HepG2 (cell line): ENCODE measurements at regions of chr5 and their contacts with region 1.

Region 1: GRCh38 chr5:5665225-5666075 is 243.0 kb downstream of the ICE1 start:
- DNase-seq: no peak
- ATAC-seq: no peak
- H3K4me3 ChIP-seq: no peak overlapping the region
- H3K27ac ChIP-seq: no peak overlapping the region
- H3K4me1 ChIP-seq: no peaks in the 10 kb centered on the region
- H3K27me3 ChIP-seq: peaks cover 0 to 13% of the 10 kb centered on the region in 2 experiments; a peak in 2 of 5 replicates
- CTCF ChIP-seq: no peak
- EP300 ChIP-seq: no peak
- POLR2A ChIP-seq: no peak
- RAD21 ChIP-seq: no peak

Region 2: DNA sequence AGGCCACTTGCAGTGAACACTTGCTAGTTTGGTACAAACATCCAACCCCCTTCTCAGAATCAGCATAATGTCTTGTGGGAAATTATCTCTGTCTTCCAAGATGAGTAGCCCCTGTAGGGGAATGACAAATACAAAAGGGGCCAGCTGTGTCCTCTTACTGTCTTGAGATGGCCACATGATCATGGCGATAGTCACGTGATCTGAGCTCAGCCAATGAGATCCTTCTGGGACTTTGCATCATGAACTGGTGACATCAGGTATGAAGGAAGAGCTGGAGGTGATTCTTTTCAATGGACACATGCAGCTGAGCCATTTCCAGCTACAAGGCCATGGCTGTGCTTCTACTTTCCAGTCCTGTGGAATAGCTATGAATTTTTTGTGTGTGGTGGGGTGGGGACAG is 1863.5 kb before region 1 on chr5:
- CTCF ChIA-PET with region 1: no interaction called
- POLR2A ChIA-PET with region 1: no interaction called
- in situ Hi-C with region 1: no loop called
- intact Hi-C with region 1: no loop called
- DNase-seq: no peak
- ATAC-seq: no peak
- H3K4me3 ChIP-seq: no peak overlapping the region
- H3K27ac ChIP-seq: no peak overlapping the region
- H3K4me1 ChIP-seq: no peaks in the 10 kb centered on the region
- H3K27me3 ChIP-seq: no peaks in the 10 kb centered on the region
- CTCF ChIP-seq: no peak
- EP300 ChIP-seq: no peak
- POLR2A ChIP-seq: no peak
- RAD21 ChIP-seq: no peak

Region 3: DNA sequence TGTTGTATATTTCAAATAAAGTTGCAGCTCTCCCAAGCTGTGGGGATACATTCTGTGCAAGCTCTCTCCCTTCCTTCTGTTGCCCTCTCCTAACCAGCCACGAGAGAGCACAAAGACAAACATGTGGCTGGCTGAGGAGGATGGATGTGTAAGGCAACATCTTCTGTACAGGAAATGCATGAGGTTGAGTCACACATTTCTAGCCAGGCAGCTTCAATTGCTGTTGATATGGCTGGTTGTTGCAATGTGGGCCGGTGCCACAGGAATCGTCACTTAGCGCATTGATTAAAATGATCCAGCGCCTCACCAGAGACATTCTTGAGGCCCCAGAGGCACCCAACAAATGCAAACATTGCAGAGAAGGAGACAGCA is 35.9 kb before region 1 on chr5:
- CTCF ChIA-PET with region 1: no interaction called
- POLR2A ChIA-PET with region 1: no interaction called
- in situ Hi-C with region 1: no loop called
- intact Hi-C with region 1: loop called (anchors 1 kb)
- DNase-seq: no peak
- ATAC-seq: no peak
- H3K4me3 ChIP-seq: no peak overlapping the region
- H3K27ac ChIP-seq: no peak overlapping the region
- H3K4me1 ChIP-seq: no peaks in the 10 kb centered on the region
- H3K27me3 ChIP-seq: peaks cover 0 to 13% of the 10 kb centered on the region in 2 experiments; a peak in 2 of 5 replicates
- CTCF ChIP-seq: no peak
- EP300 ChIP-seq: no peak
- POLR2A ChIP-seq: no peak
- RAD21 ChIP-seq: no peak

Region 4: DNA sequence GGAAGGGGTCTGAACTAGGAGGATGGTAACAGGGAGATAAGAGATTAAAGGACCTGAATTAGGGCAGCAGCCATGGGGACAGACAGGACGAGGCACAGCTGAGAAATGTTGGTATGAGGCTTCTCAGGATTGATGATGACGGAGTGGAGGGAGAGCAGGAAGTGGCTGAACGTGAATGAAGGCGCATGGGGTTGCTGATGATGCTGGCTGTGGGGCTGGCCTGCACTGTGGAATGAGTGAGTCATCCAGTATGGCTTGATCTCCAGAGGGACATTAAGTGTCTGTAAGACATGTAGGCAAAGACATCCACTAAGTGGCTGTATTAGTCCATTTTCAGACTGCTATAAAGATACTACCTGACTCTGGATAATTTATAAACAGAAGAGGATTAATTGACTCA is 13.5 kb after region 1 on chr5:
- CTCF ChIA-PET with region 1: no interaction called
- POLR2A ChIA-PET with region 1: no interaction called
- in situ Hi-C with region 1: no loop called
- intact Hi-C with region 1: no loop called
- DNase-seq: no peak
- ATAC-seq: no peak
- H3K4me3 ChIP-seq: no peak overlapping the region
- H3K27ac ChIP-seq: no peak overlapping the region
- H3K4me1 ChIP-seq: no peaks in the 10 kb centered on the region
- H3K27me3 ChIP-seq: no peaks in the 10 kb centered on the region; a peak in 1 of 5 replicates
- CTCF ChIP-seq: no peak
- EP300 ChIP-seq: no peak
- POLR2A ChIP-seq: no peak
- RAD21 ChIP-seq: no peak

Region 5: DNA sequence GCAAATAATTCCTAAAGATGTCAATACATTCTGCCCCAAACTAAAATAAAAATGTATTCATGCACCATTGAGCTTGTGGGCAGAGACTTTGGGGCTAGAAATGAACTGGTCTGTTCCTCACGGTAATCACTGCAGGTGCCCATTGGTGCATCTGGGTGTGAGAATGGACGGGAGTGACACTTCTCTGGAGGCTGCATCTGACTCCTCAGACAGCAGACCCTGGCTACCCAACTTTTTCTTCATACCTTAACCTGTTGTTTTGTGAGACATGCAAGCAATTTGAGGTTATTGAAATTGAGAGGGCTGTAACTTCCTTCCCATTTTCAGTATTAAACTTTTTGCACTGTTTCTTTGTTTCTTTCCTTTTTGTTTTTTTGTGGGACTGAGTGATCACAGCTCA is 90.4 kb after region 1 on chr5:
- CTCF ChIA-PET with region 1: no interaction called
- POLR2A ChIA-PET with region 1: no interaction called
- in situ Hi-C with region 1: no loop called
- intact Hi-C with region 1: no loop called
- DNase-seq: no peak
- ATAC-seq: no peak
- H3K4me3 ChIP-seq: no peak overlapping the region
- H3K27ac ChIP-seq: no peak overlapping the region
- H3K4me1 ChIP-seq: no peaks in the 10 kb centered on the region
- H3K27me3 ChIP-seq: no peaks in the 10 kb centered on the region; a peak in 1 of 5 replicates
- CTCF ChIP-seq: no peak
- EP300 ChIP-seq: no peak
- POLR2A ChIP-seq: no peak
- RAD21 ChIP-seq: no peak